CD8-positive, alpha-beta T cell (primary cell): ENCODE measurements at regions of chr9 and their contacts with region 1.

Region 1: GRCh38 chr9:36166101-36166927 is 2.9 kb upstream of the CCIN start:
- DNase-seq: peak; percentile 64 to 92 (median 81)
- ATAC-seq: peak; percentile 98
- H3K4me3 ChIP-seq: peak overlapping the region; percentile 34 to 53
- H3K4me3 Mint-ChIP-seq: peak overlapping the region; percentile 70
- H3K27ac ChIP-seq: no peak overlapping the region
- H3K27ac Mint-ChIP-seq: no peak overlapping the region
- H3K4me1 ChIP-seq: peaks cover 7% of the 10 kb centered on the region
- H3K4me1 Mint-ChIP-seq: peaks cover 10% of the 10 kb centered on the region
- H3K27me3 ChIP-seq: no peaks in the 10 kb centered on the region
- H3K27me3 Mint-ChIP-seq: no peaks in the 10 kb centered on the region
- CTCF ChIP-seq: peak; percentile 83

Region 2: GRCh38 chr9:36008774-36009300 is 157.5 kb before region 1 on chr9:
- CTCF ChIA-PET with region 1: interaction called, 4 read pairs
- POLR2A ChIA-PET with region 1: no interaction called
- intact Hi-C with region 1: loop called (anchors 5 kb)
- DNase-seq: peak; percentile 8 to 83 (median 68)
- ATAC-seq: peak; percentile 99
- H3K4me3 ChIP-seq: no peak overlapping the region
- H3K4me3 Mint-ChIP-seq: no peak overlapping the region
- H3K27ac ChIP-seq: no peak overlapping the region
- H3K27ac Mint-ChIP-seq: no peak overlapping the region
- H3K4me1 ChIP-seq: no peaks in the 10 kb centered on the region
- H3K4me1 Mint-ChIP-seq: peaks cover 6% of the 10 kb centered on the region
- H3K27me3 ChIP-seq: peaks cover 0 to 6% of the 10 kb centered on the region in 2 experiments
- H3K27me3 Mint-ChIP-seq: peaks cover 31% of the 10 kb centered on the region
- CTCF ChIP-seq: peak; percentile 100

Region 3: GRCh38 chr9:36136272-36136893 is 29.9 kb before region 1 on chr9 and contains the start of gene GLIPR2:
- CTCF ChIA-PET with region 1: interaction called, 26 read pairs
- POLR2A ChIA-PET with region 1: no interaction called
- intact Hi-C with region 1: loop called (anchors 1 kb)
- DNase-seq: peak; percentile 52 to 89 (median 75)
- ATAC-seq: peak; percentile 96
- H3K4me3 ChIP-seq: peak within 1 kb of the TSS; percentile 79 to 82
- H3K4me3 Mint-ChIP-seq: peak within 1 kb of the TSS; percentile 92
- H3K27ac ChIP-seq: peak within 1 kb of the TSS; percentile 56 to 58
- H3K27ac Mint-ChIP-seq: peak within 1 kb of the TSS; percentile 86
- H3K4me1 ChIP-seq: peaks cover 47% of the 10 kb centered on the region
- H3K4me1 Mint-ChIP-seq: peaks cover 49% of the 10 kb centered on the region
- H3K27me3 ChIP-seq: no peaks in the 10 kb centered on the region
- H3K27me3 Mint-ChIP-seq: no peaks in the 10 kb centered on the region
- CTCF ChIP-seq: peak; percentile 26
- total RNA-seq, gene GLIPR2: 8.6 to 10.2 TPM

Region 4: DNA sequence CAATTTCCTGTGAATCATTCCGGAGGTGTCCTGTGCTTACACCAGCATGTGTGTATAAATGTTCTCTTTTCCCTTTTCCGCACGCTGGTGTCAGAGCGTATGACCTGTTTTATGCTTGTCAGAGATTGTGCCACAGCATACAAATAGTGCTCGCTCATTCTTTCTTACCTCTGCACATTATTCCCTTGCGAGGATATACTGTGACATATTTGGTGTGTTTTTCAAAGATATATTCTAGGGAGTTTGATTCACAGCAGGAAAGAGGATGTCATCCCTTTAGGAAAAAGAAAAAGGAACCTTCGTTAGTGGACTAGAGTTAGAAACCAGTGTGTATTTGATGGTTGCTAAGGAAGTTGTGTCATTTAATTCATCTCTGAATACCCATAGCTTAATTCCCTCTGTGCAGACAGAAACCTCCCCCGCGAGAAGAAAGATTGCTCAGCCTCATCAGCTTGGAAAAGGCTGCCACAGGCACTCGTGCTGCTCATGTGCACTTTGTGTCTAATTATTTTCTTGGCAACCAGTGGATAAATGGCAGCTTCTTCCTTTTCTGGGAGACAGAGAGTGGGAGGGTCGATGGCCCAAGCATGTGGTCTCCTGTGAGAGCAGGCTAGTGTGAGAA is 11.9 kb before region 1 on chr9:
- CTCF ChIA-PET with region 1: interaction called, 39 read pairs
- POLR2A ChIA-PET with region 1: interaction called, 7 read pairs
- intact Hi-C with region 1: loop called in 1 of 2 experiments (anchors 1 kb)
- DNase-seq: no peak
- ATAC-seq: no peak
- H3K4me3 ChIP-seq: no peak overlapping the region
- H3K4me3 Mint-ChIP-seq: no peak overlapping the region
- H3K27ac ChIP-seq: no peak overlapping the region
- H3K27ac Mint-ChIP-seq: peak overlapping the region; percentile 16
- H3K4me1 ChIP-seq: peaks cover 44% of the 10 kb centered on the region
- H3K4me1 Mint-ChIP-seq: peaks cover 39% of the 10 kb centered on the region
- H3K27me3 ChIP-seq: no peaks in the 10 kb centered on the region
- H3K27me3 Mint-ChIP-seq: no peaks in the 10 kb centered on the region
- CTCF ChIP-seq: no peak

Region 5: DNA sequence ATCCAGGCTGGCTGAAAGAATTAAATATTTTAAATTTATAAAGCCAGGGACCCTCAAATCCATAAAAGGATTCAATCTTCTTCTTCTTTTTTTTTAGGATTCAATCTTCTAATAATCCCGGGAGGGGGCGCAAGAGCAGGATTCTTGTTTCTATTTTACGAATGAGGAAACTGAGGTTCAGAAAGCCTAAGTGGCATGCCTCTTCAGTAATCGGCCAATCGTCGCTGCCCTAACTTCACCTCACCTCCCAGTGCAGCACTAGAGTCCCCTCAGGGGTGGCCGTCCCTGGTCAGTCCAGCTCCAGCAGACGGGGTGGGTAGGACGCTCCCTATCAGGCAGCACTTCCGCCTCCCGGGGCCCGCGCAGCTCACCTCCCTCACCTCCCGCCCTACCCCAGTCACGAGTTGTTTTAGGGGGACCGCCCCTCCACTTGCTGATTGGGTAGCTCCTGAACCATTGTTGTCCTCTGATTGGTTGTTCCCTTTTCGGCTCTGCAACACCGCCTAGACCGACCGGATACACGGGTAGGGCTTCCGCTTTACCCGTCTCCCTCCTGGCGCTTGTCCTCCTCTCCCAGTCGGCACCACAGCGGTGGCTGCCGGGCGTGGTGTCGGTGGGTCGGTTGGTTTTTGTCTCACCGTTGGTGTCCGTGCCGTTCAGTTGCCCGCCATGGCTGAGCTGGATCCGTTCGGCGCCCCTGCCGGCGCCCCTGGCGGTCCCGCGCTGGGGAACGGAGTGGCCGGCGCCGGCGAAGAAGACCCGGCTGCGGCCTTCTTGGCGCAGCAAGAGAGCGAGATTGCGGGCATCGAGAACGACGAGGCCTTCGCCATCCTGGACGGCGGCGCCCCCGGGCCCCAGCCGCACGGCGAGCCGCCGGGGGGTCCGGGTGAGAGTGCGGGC is 24.3 kb after region 1 on chr9 and contains the start of gene CLTA:
- CTCF ChIA-PET with region 1: interaction called, 22 read pairs
- POLR2A ChIA-PET with region 1: interaction called, 5 read pairs
- intact Hi-C with region 1: loop called in 1 of 2 experiments (anchors 1 kb)
- DNase-seq: peak; percentile 84 to 99 (median 93)
- ATAC-seq: peak; percentile 97
- H3K4me3 ChIP-seq: peak within 1 kb of the TSS; percentile 63 to 95
- H3K4me3 Mint-ChIP-seq: peak within 1 kb of the TSS; percentile 94
- H3K27ac ChIP-seq: peak within 1 kb of the TSS; percentile 74 to 80
- H3K27ac Mint-ChIP-seq: peak within 1 kb of the TSS; percentile 91
- H3K4me1 ChIP-seq: peaks cover 37% of the 10 kb centered on the region
- H3K4me1 Mint-ChIP-seq: peaks cover 50% of the 10 kb centered on the region
- H3K27me3 ChIP-seq: no peaks in the 10 kb centered on the region
- H3K27me3 Mint-ChIP-seq: no peaks in the 10 kb centered on the region
- CTCF ChIP-seq: peak; percentile 55
- total RNA-seq, gene CLTA: 39.1 to 39.6 TPM

Region 6: GRCh38 chr9:36250079-36250478 is 83.8 kb after region 1 on chr9:
- CTCF ChIA-PET with region 1: no interaction called
- POLR2A ChIA-PET with region 1: no interaction called
- intact Hi-C with region 1: no loop called
- DNase-seq: no peak
- ATAC-seq: no peak
- H3K4me3 ChIP-seq: no peak overlapping the region
- H3K4me3 Mint-ChIP-seq: no peak overlapping the region
- H3K27ac ChIP-seq: no peak overlapping the region
- H3K27ac Mint-ChIP-seq: no peak overlapping the region
- H3K4me1 ChIP-seq: no peaks in the 10 kb centered on the region
- H3K4me1 Mint-ChIP-seq: peaks cover 18% of the 10 kb centered on the region
- H3K27me3 ChIP-seq: no peaks in the 10 kb centered on the region
- H3K27me3 Mint-ChIP-seq: no peaks in the 10 kb centered on the region
- CTCF ChIP-seq: no peak